PC-3 (cell line): ENCODE measurements at regions of chr6 and their contacts with region 1.

Region 1: DNA sequence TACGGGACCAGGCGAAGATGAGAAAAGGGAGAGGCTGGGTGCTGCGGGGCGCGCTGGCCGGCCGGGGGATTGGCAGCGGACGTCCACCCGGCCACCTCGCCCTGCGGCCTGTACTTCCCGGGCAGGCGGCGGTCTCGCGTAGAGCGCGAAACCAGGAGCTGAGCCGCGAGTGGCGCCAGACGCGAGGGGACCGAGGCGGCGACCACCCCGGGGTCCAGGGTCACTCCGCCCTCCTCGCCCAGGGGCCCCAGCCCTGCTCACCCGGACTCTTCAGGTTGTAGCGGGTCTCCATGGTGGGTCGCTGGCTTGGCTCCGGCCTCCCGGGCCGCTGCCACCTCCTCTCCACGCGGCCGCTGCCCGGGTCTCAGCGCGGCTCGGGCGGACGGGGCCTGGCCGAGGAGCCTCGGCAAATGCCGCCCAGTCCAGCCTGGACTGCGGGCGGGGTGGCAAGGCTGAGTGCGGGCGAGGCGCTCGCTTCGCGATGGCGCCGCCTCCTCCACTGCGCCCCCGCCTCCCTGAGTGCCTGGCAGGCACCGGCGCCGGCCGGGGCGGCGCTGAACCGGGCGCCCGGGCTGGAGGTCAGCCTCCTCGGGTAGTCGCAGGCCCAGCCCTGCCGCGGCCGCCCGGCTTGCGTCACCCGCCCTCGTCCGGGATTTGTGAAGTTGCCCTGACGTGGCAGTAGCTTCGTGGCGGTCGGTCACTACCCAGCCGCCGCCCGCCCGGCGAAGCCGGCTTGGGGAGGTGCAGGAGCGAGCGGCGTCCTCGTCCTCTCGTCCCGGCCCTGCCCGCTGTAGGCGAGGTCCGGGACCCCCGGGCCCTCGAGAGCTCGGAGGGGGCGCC is at the start of gene UBE2J1:
- DNase-seq: peak; percentile 82
- ATAC-seq: peak; percentile 93
- H3K4me3 ChIP-seq: peak within 1 kb of the TSS; percentile 87
- H3K27ac ChIP-seq: peak within 1 kb of the TSS; percentile 64
- H3K4me1 ChIP-seq: peaks cover 10% of the 10 kb centered on the region; the same call in 1 of the 2 replicates
- H3K27me3 ChIP-seq: no peaks in the 10 kb centered on the region
- CTCF ChIP-seq: no peak
- total RNA-seq, gene UBE2J1: 22.4 and 23.2 TPM in 2 replicates

Region 2: GRCh38 chr6:89242574-89243330 is 109.7 kb before region 1 on chr6:
- CTCF ChIA-PET with region 1: no interaction called
- POLR2A ChIA-PET with region 1: no interaction called
- intact Hi-C with region 1: loop called (anchors 5 kb)
- DNase-seq: peak; percentile 58
- ATAC-seq: peak; percentile 70
- H3K4me3 ChIP-seq: no peak overlapping the region
- H3K27ac ChIP-seq: no peak overlapping the region
- H3K4me1 ChIP-seq: no peaks in the 10 kb centered on the region
- H3K27me3 ChIP-seq: no peaks in the 10 kb centered on the region; the same call in 1 of the 2 replicates
- CTCF ChIP-seq: peak; percentile 59

Region 3: DNA sequence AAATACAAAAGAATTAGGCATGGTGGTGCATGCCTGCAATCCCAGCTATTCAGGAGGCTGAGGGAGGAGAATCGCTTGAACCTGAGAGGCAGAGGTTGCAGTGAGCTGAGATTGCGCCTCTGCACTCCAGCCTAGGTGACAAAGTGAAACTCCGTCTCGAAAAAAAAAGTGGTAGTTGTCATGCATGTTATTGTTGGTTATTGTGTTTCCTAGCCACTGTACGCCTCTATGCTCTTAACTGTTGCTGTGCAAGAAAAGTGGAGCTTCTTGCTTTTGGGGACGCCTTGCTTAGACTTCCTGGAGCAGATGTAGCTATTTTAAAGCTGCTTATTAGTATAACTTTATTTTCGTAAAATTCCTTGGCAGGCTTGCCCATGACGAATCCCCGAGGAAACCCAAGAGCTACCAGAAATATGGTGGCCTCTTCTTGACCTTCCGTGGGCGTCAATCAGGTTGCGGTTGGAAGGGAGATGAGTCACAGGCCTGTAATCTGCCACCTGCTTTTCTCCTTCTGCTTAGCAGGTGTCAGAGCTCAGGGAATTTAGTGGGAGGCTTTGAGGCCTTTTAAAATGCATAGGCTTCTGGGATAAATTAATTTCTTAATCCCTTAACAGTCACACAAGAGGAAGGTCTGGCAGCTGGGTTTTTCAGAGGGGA is 54.7 kb before region 1 on chr6:
- CTCF ChIA-PET with region 1: no interaction called
- POLR2A ChIA-PET with region 1: no interaction called
- intact Hi-C with region 1: loop called (anchors 1 kb)
- DNase-seq: peak; percentile 94
- ATAC-seq: peak; percentile 89
- H3K4me3 ChIP-seq: peak overlapping the region; percentile 55; the same call in 1 of the 2 replicates
- H3K27ac ChIP-seq: peak overlapping the region; percentile 90
- H3K4me1 ChIP-seq: peaks cover 26% of the 10 kb centered on the region
- H3K27me3 ChIP-seq: no peaks in the 10 kb centered on the region
- CTCF ChIP-seq: no peak